K562 (cell line): ENCODE measurements at regions of chr11 and their contacts with region 1.

Region 1: GRCh38 chr11:60193687-60194433 is 11.0 kb upstream of the MS4A6A start:
- DNase-seq: peak; percentile 48 to 75 (median 52)
- ATAC-seq: peak; percentile 92
- H3K4me3 ChIP-seq: no peak overlapping the region
- H3K27ac ChIP-seq: peak overlapping the region; percentile 84
- H3K4me1 ChIP-seq: peaks cover 3 to 27% of the 10 kb centered on the region in 2 experiments; a peak in 3 of 5 replicates
- H3K27me3 ChIP-seq: no peaks in the 10 kb centered on the region
- CTCF ChIP-seq: peak; percentile 77 to 99 (median 91)
- EP300 ChIP-seq: peak; percentile 72
- POLR2A ChIP-seq: no peak
- RAD21 ChIP-seq: peak in 1 of 2 experiments; percentile 66; a peak in 2 of 4 replicates

Region 2: GRCh38 chr11:59810189-59810910 is 383.5 kb before region 1 on chr11 and contains the start of gene MRPL16:
- CTCF ChIA-PET with region 1: no interaction called
- POLR2A ChIA-PET with region 1: no interaction called
- in situ Hi-C with region 1: no loop called
- intact Hi-C with region 1: loop called (anchors 5 kb)
- DNase-seq: peak; percentile 87 to 96 (median 88)
- ATAC-seq: peak; percentile 98
- H3K4me3 ChIP-seq: peak within 1 kb of the TSS; percentile 98
- H3K27ac ChIP-seq: peak within 1 kb of the TSS; percentile 94
- H3K4me1 ChIP-seq: peaks cover 7 to 15% of the 10 kb centered on the region in 2 experiments; a peak in 4 of 5 replicates
- H3K27me3 ChIP-seq: no peaks in the 10 kb centered on the region
- CTCF ChIP-seq: peak; percentile 46 to 78 (median 47); a peak in 5 of 6 replicates
- EP300 ChIP-seq: peak; percentile 43
- POLR2A ChIP-seq: peak; percentile 92
- RAD21 ChIP-seq: peak; percentile 49 to 57
- polyA plus RNA-seq, gene MRPL16: 63.3 to 99.3 TPM

Region 3: DNA sequence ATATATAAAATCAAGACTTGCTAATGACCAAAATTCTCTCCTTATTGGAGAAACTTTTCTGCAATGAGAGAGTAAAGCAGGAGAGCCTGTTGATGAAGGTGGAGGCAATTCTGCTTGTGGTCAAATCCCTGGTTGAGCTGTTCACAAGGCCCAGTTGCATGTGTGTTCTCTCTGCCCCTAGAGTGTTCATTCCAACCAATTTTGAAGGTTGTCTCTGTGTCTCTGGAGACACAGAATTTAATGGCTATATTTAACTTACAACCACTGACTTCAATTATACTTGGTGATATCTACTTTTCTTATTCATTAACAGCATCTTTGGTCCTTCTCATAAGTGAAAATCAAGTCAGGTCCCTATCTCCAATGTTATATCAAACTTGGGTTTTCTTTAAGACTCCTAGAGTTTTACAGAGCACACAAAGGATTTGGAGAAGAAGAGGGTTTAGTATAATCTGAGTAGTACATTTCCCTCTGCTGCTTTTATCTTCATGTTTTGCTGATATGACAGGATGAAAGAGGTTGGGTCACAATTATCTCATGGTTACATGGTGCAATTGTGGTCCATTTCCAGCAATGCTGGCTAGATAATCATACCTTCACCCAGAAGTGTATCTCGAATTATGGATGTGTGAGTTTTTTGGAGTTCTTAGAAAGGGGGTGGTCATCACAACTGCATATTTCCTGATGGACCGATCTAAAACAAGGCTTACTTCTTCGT is 226.0 kb before region 1 on chr11:
- CTCF ChIA-PET with region 1: no interaction called
- POLR2A ChIA-PET with region 1: no interaction called
- in situ Hi-C with region 1: no loop called
- intact Hi-C with region 1: loop called (anchors 5 kb)
- DNase-seq: peak in 2 of 4 experiments; percentile 80 to 85
- ATAC-seq: peak; percentile 91
- H3K4me3 ChIP-seq: no peak overlapping the region
- H3K27ac ChIP-seq: peak overlapping the region; percentile 76
- H3K4me1 ChIP-seq: peaks cover 0 to 21% of the 10 kb centered on the region in 2 experiments; a peak in 3 of 5 replicates
- H3K27me3 ChIP-seq: no peaks in the 10 kb centered on the region
- CTCF ChIP-seq: no peak
- EP300 ChIP-seq: peak; percentile 98
- POLR2A ChIP-seq: no peak
- RAD21 ChIP-seq: peak; percentile 13 to 38; a peak in 3 of 4 replicates

Region 4: DNA sequence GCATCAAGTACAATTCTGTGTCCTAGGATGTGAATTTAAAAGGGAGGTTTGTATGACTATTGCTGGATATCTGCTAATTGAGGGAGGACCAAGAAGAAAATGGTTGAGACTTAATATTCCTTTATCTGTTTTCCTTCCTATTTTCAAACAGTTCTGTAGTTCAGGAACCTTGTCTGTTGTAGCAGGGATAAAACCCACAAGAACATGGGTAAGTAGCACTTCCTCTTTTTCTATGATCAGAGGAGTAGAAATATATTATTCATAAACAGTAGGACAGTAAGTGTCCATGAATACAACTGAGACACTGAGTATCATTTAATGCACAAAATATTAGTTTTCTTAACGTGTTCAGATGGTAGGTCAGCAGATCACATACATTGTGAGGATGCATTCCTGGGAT is 129.7 kb before region 1 on chr11:
- CTCF ChIA-PET with region 1: no interaction called
- POLR2A ChIA-PET with region 1: no interaction called
- in situ Hi-C with region 1: no loop called
- intact Hi-C with region 1: loop called (anchors 10 kb)
- DNase-seq: no peak
- ATAC-seq: peak; percentile 39; the same call in 1 of the 3 replicates
- H3K4me3 ChIP-seq: no peak overlapping the region
- H3K27ac ChIP-seq: peak overlapping the region; percentile 23; the same call in 1 of the 3 replicates
- H3K4me1 ChIP-seq: peaks cover 0 to 13% of the 10 kb centered on the region in 2 experiments; a peak in 2 of 5 replicates
- H3K27me3 ChIP-seq: no peaks in the 10 kb centered on the region
- CTCF ChIP-seq: no peak
- EP300 ChIP-seq: no peak
- POLR2A ChIP-seq: no peak
- RAD21 ChIP-seq: no peak

Region 5: DNA sequence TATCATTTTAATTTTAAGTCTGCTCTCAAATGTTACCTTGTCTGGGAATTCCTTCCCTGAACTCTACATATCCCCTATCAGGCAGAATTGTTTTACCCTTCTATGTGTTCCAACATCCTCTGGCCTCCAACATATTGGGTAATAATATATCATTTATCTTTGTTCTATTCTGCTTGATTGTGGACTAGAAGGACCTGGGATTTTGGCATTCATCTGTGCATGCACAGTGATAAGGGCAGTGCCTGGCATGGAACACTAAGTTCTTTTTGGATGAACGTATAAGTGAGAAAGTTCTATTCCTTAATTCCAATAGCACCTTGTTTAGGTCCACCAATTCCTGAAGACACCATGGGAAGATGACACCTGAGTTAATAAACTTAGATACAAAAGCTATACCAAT is 106.6 kb before region 1 on chr11:
- CTCF ChIA-PET with region 1: no interaction called
- POLR2A ChIA-PET with region 1: no interaction called
- in situ Hi-C with region 1: no loop called
- intact Hi-C with region 1: no loop called
- DNase-seq: no peak
- ATAC-seq: no peak
- H3K4me3 ChIP-seq: no peak overlapping the region
- H3K27ac ChIP-seq: no peak overlapping the region
- H3K4me1 ChIP-seq: peaks cover 0 to 13% of the 10 kb centered on the region in 2 experiments; a peak in 2 of 5 replicates
- H3K27me3 ChIP-seq: no peaks in the 10 kb centered on the region
- CTCF ChIP-seq: no peak
- EP300 ChIP-seq: no peak
- POLR2A ChIP-seq: no peak
- RAD21 ChIP-seq: no peak

Region 6: DNA sequence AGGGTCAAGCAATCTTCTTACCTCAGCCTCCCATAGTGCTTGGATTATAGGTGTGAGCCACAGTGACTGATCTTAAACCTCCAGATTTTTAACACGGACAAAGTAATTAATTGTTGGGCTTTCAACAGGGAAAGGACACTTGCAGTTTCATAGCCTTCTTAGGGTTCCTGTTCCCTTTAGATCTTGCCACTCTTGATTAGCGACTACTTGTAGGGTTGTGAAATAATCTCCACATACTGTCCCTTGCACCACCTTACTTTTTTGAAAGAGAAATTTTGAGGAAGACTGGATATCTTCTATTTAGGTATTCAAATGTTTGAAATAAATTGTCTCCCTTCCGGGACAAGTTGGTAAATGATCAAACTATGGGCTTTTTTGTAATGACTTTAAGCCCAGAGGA is 41.5 kb after region 1 on chr11:
- CTCF ChIA-PET with region 1: no interaction called
- POLR2A ChIA-PET with region 1: no interaction called
- in situ Hi-C with region 1: no loop called
- intact Hi-C with region 1: loop called (anchors 5 kb)
- DNase-seq: no peak
- ATAC-seq: no peak
- H3K4me3 ChIP-seq: no peak overlapping the region
- H3K27ac ChIP-seq: no peak overlapping the region
- H3K4me1 ChIP-seq: 0 out of 5 replicates have a peak, but pooled peaks cover 0 to 2% of the 10 kb centered on the region in 2 experiments
- H3K27me3 ChIP-seq: no peaks in the 10 kb centered on the region
- CTCF ChIP-seq: no peak
- EP300 ChIP-seq: no peak
- POLR2A ChIP-seq: no peak
- RAD21 ChIP-seq: no peak